ENCODE measurements at regions of chr1 and their contacts with region 1.

Region 1: GRCh38 chr1:55127827-55128343 is 87.3 kb downstream of the USP24 start:
- DNase-seq: no peak
- H3K4me3 Mint-ChIP-seq: peak overlapping the region; percentile 41
- H3K27ac Mint-ChIP-seq: peak overlapping the region; percentile 57
- H3K4me1 Mint-ChIP-seq: peaks cover 23% of the 10 kb centered on the region
- H3K27me3 Mint-ChIP-seq: no peaks in the 10 kb centered on the region
- CTCF ChIP-seq: no peak

Region 2: GRCh38 chr1:55146781-55147180 is 18.9 kb after region 1 on chr1:
- CTCF ChIA-PET with region 1: no interaction called
- intact Hi-C with region 1: loop called (anchors 2 kb)
- DNase-seq: no peak
- H3K4me3 Mint-ChIP-seq: no peak overlapping the region
- H3K27ac Mint-ChIP-seq: no peak overlapping the region
- H3K4me1 Mint-ChIP-seq: no peaks in the 10 kb centered on the region
- H3K27me3 Mint-ChIP-seq: no peaks in the 10 kb centered on the region
- CTCF ChIP-seq: no peak